MCF 10A (cell line): ENCODE measurements at regions of chr10 and their contacts with region 1.

Region 1: DNA sequence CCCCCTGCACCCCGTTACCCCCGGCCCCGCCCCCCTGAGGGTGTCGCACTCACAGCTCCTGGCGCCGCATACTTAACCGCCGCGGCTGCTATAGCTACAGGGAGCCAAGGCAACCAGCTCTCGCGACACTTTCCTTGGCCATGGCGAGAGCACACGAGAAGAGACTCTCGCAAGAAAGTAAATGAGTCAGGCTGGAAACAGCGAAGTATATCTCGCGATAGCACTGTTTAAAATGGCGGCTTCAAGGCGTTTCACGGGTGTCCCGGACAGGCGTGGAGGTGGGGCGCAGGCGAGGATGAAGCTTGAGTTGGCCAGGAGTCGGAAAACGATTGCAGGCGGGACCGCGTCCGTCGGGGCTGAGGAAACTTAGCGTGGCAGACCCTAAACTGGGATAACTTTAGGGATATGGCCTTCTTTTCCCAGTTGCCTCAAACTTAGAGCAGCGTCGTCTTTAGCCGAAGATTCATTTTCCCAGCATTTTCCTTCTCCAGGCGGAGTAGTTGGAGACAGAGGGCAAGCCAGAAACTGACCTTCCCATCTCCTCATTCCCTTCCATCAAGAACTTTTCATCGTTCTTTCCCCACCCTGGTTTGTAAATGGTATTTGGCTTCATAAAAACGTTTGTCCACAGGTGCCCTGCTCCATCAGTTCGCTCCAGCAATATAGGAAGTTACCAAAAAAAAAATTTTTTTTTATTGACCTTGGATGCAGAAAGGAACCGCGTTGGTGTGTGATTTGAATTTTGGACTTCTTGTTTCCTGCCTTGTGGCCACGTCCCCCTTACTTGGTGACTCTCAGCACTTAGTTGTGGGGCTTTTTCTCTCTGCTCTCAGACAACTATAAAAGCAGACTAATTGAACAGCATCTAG is 15.2 kb downstream of the MYOZ1 start:
- DNase-seq: peak; percentile 98
- H3K4me3 Mint-ChIP-seq: peak overlapping the region; percentile 95
- H3K27ac Mint-ChIP-seq: peak overlapping the region; percentile 100
- H3K4me1 Mint-ChIP-seq: peaks cover 8% of the 10 kb centered on the region
- H3K27me3 Mint-ChIP-seq: no peaks in the 10 kb centered on the region
- CTCF ChIP-seq: no peak

Region 2: GRCh38 chr10:73529089-73529832 is 96.9 kb before region 1 on chr10:
- CTCF ChIA-PET with region 1: interaction called, 13 read pairs
- POLR2A ChIA-PET with region 1: interaction called, 6 read pairs
- intact Hi-C with region 1: loop called (anchors 1 kb)
- DNase-seq: peak; percentile 80
- H3K4me3 Mint-ChIP-seq: no peak overlapping the region
- H3K27ac Mint-ChIP-seq: no peak overlapping the region
- H3K4me1 Mint-ChIP-seq: no peaks in the 10 kb centered on the region
- H3K27me3 Mint-ChIP-seq: no peaks in the 10 kb centered on the region
- CTCF ChIP-seq: peak; percentile 87

Region 3: DNA sequence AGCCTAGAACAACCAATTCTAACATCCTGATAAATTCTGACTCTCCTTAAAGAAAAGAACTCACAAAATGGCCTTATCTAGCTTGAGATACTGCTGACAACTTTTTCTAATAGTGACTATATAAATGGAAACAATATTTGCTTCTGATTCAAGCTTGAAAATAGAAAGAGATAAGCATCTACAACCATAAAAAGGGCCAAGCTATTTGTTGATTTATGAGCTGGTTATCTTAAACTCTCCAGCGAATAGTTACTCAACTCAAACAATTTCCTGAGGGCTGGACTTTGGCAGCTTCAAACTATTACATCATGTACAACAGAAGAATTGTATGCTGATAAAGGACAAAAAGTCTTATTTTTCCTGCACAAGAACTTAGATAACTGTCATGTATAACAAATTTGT is 39.5 kb before region 1 on chr10:
- CTCF ChIA-PET with region 1: no interaction called
- POLR2A ChIA-PET with region 1: interaction called, 16 read pairs
- intact Hi-C with region 1: no loop called
- DNase-seq: peak; percentile 49
- H3K4me3 Mint-ChIP-seq: no peak overlapping the region
- H3K27ac Mint-ChIP-seq: peak overlapping the region; percentile 41
- H3K4me1 Mint-ChIP-seq: peaks cover 35% of the 10 kb centered on the region
- H3K27me3 Mint-ChIP-seq: no peaks in the 10 kb centered on the region
- CTCF ChIP-seq: no peak

Region 4: GRCh38 chr10:73601486-73601921 is 24.6 kb before region 1 on chr10:
- CTCF ChIA-PET with region 1: no interaction called
- POLR2A ChIA-PET with region 1: interaction called, 12 read pairs
- intact Hi-C with region 1: no loop called
- DNase-seq: peak; percentile 36
- H3K4me3 Mint-ChIP-seq: no peak overlapping the region
- H3K27ac Mint-ChIP-seq: no peak overlapping the region
- H3K4me1 Mint-ChIP-seq: peaks cover 10% of the 10 kb centered on the region
- H3K27me3 Mint-ChIP-seq: no peaks in the 10 kb centered on the region
- CTCF ChIP-seq: no peak

Region 5: GRCh38 chr10:73644015-73644743 is 18.1 kb after region 1 on chr10:
- CTCF ChIA-PET with region 1: interaction called, 14 read pairs
- POLR2A ChIA-PET with region 1: interaction called, 3 read pairs
- intact Hi-C with region 1: no loop called
- DNase-seq: peak; percentile 75
- H3K4me3 Mint-ChIP-seq: no peak overlapping the region
- H3K27ac Mint-ChIP-seq: no peak overlapping the region
- H3K4me1 Mint-ChIP-seq: peaks cover 7% of the 10 kb centered on the region
- H3K27me3 Mint-ChIP-seq: no peaks in the 10 kb centered on the region
- CTCF ChIP-seq: peak; percentile 85

Region 6: GRCh38 chr10:74035303-74035702 is 409.2 kb after region 1 on chr10:
- CTCF ChIA-PET with region 1: no interaction called
- POLR2A ChIA-PET with region 1: no interaction called
- intact Hi-C with region 1: no loop called
- DNase-seq: no peak
- H3K4me3 Mint-ChIP-seq: no peak overlapping the region
- H3K27ac Mint-ChIP-seq: peak overlapping the region; percentile 0
- H3K4me1 Mint-ChIP-seq: peaks cover 38% of the 10 kb centered on the region
- H3K27me3 Mint-ChIP-seq: no peaks in the 10 kb centered on the region
- CTCF ChIP-seq: peak; percentile 11